Right ventricle myocardium superior (tissue), 1 donor: ENCODE measurements at regions of chr1 and their contacts with region 1.

Region 1: DNA sequence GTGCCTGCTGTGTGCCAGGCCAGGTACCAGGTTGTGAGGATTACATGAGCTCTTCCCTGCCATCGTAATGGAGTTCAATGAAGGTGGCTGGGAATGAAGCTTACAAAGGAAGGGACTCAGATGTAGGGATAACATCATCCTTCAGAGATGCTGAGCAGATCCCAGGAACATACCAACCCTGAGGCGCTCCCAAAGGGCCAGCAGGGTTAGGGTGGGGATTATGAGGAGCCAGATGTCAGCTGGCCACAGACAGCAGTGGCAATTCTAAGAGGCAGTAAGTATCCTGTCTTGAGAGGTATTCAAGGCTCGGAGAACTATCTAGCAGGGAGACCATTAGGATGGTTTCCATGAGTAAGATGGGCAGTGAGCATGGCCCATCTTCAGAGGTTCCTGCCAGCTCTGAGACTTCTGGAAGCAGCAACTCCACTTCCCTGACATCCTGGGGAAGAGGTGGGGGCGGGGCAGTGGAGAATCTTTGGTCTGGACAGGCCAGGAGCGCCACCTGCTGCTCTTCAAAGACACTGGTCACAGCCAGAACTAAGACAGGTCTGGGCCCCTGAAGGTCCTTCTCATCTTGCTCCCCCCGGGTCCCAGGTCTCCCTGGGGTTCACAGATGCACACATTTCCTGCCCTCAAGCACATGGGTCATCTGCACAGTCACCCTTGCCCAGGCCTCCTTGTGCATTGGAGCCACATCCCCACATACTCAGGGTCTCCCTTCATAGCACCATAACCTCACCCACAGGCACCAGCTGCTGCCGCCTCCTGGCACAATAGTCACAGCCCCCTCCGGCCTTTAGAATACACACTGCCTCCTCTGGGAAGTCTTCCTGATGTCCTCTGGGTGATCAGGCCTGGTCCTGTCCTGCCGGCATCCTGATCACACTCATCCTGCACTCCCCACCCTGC is 2.7 kb upstream of the SDC3 start:
- DNase-seq: peak; percentile 93
- ATAC-seq: peak; percentile 84

Region 2: GRCh38 chr1:30718636-30719405 is 192.5 kb before region 1 on chr1:
- intact Hi-C with region 1: loop called (anchors 5 kb)
- DNase-seq: peak; percentile 86
- ATAC-seq: peak; percentile 91

Region 3: GRCh38 chr1:30779294-30780071 is 131.8 kb before region 1 on chr1:
- intact Hi-C with region 1: loop called (anchors 5 kb)
- DNase-seq: peak; percentile 91
- ATAC-seq: peak; percentile 70

Region 4: GRCh38 chr1:30801771-30802198 is 109.5 kb before region 1 on chr1:
- intact Hi-C with region 1: loop called (anchors 2 kb)
- DNase-seq: peak; percentile 92
- ATAC-seq: peak; percentile 82

Region 5: GRCh38 chr1:30856260-30856790 is 55.0 kb before region 1 on chr1:
- intact Hi-C with region 1: loop called (anchors 10 kb)
- DNase-seq: no peak
- ATAC-seq: no peak

Region 6: GRCh38 chr1:30955448-30956015 is 44.2 kb after region 1 on chr1:
- intact Hi-C with region 1: no loop called
- DNase-seq: no peak
- ATAC-seq: no peak